HAP-1 (cell line): ENCODE measurements at regions of chr12 and their contacts with region 1.

Region 1: DNA sequence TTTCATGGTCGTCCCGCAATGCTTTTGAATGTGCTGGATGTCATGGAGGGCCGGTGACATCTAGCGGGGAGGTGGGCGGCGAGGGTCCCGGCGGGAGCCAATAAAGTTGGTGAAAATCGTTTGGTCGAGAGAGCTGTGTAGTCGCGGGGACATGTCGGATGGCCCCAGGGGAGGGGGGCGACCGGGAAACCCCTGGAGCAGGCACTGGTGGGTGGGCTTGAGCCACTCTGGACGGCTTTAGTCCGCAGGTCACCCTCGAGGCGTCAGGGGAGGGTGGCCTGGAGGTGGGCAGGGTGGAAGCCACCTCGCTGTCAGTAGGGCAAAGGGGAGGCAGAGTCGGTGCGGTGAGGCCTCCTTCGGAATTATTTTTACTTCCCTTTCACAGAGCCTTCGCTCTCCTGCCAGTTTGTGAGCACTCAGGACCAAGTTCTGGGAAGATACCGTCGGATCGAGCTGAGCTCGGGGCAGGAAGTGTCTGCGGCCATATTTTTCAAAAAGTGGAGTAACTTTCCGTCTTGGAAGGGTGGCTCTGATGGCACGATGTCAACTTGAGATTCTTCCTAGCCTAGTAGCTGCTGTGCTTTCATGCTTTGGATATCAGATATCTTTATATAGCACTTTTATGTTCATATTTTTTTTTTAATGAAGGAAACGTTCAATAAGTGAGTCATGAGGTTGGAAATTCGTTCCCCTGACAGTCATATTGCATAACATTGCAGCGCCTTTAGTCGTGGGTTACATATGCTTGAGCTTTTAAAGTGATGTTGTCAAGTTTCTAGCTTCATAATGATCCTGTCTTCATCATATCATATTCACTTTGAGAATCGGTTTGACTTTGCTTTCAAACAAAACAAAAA is 28.1 kb downstream of the WBP11 start:
- DNase-seq: peak in 1 of 2 experiments; percentile 16
- H3K4me3 ChIP-seq: peak overlapping the region; percentile 45
- H3K4me1 ChIP-seq: peaks cover 12% of the 10 kb centered on the region
- H3K27me3 ChIP-seq: no peaks in the 10 kb centered on the region

Region 2: DNA sequence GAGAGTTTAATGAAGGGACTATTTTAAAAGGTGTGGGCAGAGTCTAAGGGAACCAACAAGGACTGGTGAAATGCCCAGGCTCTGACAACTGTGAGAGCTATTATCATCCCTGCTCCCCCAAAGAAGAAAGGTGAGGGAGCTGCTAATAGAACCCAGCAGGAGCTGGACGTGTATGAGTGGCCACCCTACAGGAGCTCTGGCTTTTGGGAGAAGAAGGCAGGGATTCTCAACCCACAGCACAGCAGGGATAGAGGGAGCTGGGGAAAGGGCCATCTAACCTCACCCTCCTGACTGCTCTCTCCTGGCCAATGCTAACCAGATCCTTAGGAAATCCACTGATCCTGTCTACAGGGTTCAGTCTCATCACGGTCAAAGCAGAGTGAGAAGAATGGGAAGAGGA is 850.8 kb before region 1 on chr12:
- in situ Hi-C with region 1: no loop called
- DNase-seq: no peak
- H3K4me3 ChIP-seq: no peak overlapping the region
- H3K4me1 ChIP-seq: no peaks in the 10 kb centered on the region
- H3K27me3 ChIP-seq: no peaks in the 10 kb centered on the region

Region 3: DNA sequence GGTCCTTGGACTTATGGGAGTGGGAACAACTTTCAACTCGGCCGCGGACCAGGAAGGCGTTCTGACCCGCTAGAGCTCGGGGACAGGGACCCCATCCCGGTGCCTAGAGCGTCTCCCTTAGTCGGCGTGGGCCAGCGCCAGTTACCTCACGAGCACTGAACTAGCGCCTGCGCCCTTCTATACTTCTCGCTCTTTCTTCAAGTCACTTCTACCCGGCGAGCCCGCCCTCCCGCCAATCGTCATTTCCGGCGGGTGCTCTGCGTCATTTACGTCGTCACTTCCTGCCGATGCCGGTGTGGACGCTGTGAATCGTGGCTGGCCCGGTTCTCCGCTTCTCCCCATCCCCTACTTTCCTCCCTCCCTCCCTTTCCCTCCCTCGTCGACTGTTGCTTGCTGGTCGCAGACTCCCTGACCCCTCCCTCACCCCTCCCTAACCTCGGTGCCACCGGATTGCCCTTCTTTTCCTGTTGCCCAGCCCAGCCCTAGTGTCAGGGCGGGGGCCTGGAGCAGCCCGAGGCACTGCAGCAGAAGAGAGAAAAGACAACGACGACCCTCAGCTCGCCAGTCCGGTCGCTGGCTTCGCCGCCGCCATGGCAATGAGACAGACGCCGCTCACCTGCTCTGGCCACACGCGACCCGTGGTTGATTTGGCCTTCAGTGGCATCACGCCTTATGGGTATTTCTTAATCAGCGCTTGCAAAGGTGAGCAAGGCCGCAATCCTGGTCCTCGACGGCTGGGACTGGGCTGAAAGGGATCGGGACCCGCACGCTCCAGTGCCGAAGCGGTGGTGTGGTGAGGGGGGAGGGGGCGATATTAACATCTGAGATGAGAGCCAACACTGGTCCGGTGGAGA is 1107.2 kb after region 1 on chr12 and contains the start of gene STRAP:
- in situ Hi-C with region 1: loop called (anchors 25 kb)
- DNase-seq: peak; percentile 94 to 95
- H3K4me3 ChIP-seq: peak within 1 kb of the TSS; percentile 87
- H3K4me1 ChIP-seq: peaks cover 29% of the 10 kb centered on the region
- H3K27me3 ChIP-seq: no peaks in the 10 kb centered on the region